H1 (cell line): ENCODE measurements at regions of chr18 and their contacts with region 1.

Region 1: GRCh38 chr18:48037481-48038271 is 107.2 kb upstream of the SMAD2 start:
- DNase-seq: peak in 1 of 2 experiments; percentile 69
- H3K4me3 ChIP-seq: no peak overlapping the region
- H3K27ac ChIP-seq: no peak overlapping the region
- H3K4me1 ChIP-seq: no peaks in the 10 kb centered on the region
- H3K27me3 ChIP-seq: no peaks in the 10 kb centered on the region; a peak in 1 of 7 replicates
- CTCF ChIP-seq: peak; percentile 78 to 88 (median 87)
- EP300 ChIP-seq: no peak
- POLR2A ChIP-seq: no peak
- RAD21 ChIP-seq: peak; percentile 83 to 86

Region 2: DNA sequence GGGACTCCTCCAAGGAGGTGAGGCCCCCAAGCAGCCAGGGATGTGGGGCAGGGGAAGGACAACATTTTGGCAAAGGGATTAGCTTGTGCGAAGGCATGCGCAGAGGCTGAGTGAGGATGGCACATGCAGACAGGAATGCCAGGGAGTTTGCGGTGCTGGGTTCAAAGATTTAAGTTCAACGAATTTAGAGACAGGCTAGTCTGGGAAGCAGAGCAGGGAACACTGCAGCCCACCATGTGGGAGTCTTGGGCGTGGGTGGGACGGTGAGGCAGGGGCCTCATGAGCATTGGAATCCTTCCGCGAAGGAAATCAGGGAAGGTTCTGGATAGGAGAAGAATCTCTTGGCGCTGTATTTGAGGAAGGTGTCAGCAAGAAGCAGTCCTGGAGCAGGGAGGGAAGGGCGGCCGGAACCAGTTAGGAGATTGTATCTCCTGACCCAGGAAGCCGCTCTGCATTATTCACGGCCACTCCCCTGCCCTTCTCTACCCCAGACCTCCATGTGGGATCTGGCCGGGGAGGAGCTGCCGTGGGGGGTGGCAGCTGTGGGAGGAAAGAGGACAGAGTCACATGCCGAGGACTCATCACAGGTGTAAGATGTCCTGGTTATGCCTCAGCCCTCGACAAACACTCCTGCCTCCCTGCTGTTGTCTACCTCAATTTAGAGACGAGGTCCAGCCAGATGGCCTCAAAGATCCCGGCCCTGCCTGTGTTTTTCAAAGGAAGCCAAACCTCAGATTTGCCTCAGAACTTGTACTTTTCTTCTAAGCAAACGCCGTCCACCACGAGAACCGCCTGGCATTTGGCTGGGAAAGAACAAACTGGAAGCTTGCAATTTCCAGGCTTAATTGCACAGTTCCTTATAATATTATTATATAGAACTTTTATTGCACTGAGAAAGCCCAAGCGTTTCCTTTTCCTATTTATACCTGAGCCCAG is 16.5 kb after region 1 on chr18:
- CTCF ChIA-PET with region 1: interaction called, 16 read pairs
- POLR2A ChIA-PET with region 1: no interaction called
- DNase-seq: no peak
- H3K4me3 ChIP-seq: no peak overlapping the region
- H3K27ac ChIP-seq: no peak overlapping the region
- H3K4me1 ChIP-seq: peaks cover under 1 to 5% (median 2%) of the 10 kb centered on the region in 4 experiments; a peak in 6 of 7 replicates
- H3K27me3 ChIP-seq: 0 out of 7 replicates have a peak, but pooled peaks cover 0 to 2% (median 0%) of the 10 kb centered on the region in 4 experiments
- CTCF ChIP-seq: no peak
- EP300 ChIP-seq: no peak
- POLR2A ChIP-seq: no peak
- RAD21 ChIP-seq: no peak

Region 3: GRCh38 chr18:48059455-48060010 is 21.9 kb after region 1 on chr18:
- CTCF ChIA-PET with region 1: interaction called, 13 read pairs
- POLR2A ChIA-PET with region 1: no interaction called
- DNase-seq: no peak
- H3K4me3 ChIP-seq: no peak overlapping the region
- H3K27ac ChIP-seq: no peak overlapping the region
- H3K4me1 ChIP-seq: peaks cover 3 to 11% (median 9%) of the 10 kb centered on the region in 4 experiments
- H3K27me3 ChIP-seq: no peaks in the 10 kb centered on the region; a peak in 2 of 7 replicates
- CTCF ChIP-seq: no peak
- EP300 ChIP-seq: no peak
- POLR2A ChIP-seq: no peak
- RAD21 ChIP-seq: peak; percentile 6 to 12; a peak in 2 of 4 replicates

Region 4: GRCh38 chr18:48139431-48140347 is 102.0 kb after region 1 on chr18:
- CTCF ChIA-PET with region 1: interaction called, 13 read pairs
- POLR2A ChIA-PET with region 1: no interaction called
- DNase-seq: no peak
- H3K4me3 ChIP-seq: no peak overlapping the region
- H3K27ac ChIP-seq: no peak overlapping the region
- H3K4me1 ChIP-seq: peaks cover 9 to 27% (median 20%) of the 10 kb centered on the region in 4 experiments
- H3K27me3 ChIP-seq: peaks cover 11 to 49% (median 37%) of the 10 kb centered on the region in 4 experiments
- CTCF ChIP-seq: no peak
- EP300 ChIP-seq: no peak
- POLR2A ChIP-seq: no peak
- RAD21 ChIP-seq: no peak